Mammary epithelial cell (primary cell): ENCODE measurements at regions of chr11 and their contacts with region 1.

Region 1: DNA sequence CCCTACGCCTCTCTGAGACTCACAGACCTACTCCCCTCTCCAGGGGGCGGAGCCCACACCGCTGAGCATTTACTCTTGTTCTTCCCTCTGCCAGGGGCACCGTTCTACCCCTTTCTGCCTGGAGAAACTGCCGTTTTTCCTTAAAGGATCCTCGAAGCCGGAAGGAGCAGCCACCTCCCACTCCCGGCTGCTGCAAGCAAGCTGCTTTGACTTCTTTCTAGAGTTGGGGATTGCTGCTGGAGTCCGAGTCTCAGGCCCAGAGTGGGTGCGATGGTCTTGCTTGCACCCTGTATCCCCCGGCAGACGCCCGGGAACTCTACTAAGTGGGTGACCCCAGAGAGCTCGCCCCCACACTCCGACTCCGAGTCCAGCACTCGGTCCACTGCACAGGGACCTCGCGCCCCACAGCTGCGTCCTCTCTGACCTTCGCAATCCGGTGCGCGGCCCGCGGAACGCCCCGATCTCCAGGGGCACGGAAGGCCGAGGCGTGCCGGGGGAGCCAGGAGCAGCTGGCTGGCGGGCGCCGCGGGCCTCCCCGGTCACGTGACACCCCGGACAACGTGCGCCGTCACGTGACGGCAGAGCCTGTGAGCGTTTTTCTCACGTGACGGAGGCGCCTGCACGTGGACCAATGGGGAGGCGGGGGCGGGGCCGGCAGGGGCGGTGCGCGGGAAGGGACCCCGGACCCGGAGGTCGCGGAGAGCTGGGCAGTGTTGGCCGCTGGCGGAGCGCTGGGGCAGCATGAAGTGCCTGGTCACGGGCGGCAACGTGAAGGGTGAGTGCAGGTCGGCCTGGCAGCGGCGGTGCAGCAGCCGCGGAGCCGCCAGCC is at the start of gene RAD9A:
- DNase-seq: peak; percentile 89
- H3K4me3 ChIP-seq: peak within 1 kb of the TSS; percentile 74 to 78 (median 77)
- H3K27ac ChIP-seq: peak within 1 kb of the TSS; percentile 75
- H3K4me1 ChIP-seq: peaks cover 6% of the 10 kb centered on the region
- H3K27me3 ChIP-seq: no peaks in the 10 kb centered on the region
- CTCF ChIP-seq: no peak
- total RNA-seq, gene RAD9A: 6.5 to 17.2 TPM

Region 2: GRCh38 chr11:67252831-67253239 is 138.7 kb before region 1 on chr11:
- CTCF ChIA-PET with region 1: no interaction called
- dilution Hi-C with region 1: loop called (anchors 5 kb)
- in situ Hi-C with region 1: no loop called
- intact Hi-C with region 1: no loop called
- DNase-seq: peak; percentile 49
- H3K4me3 ChIP-seq: no peak overlapping the region
- H3K27ac ChIP-seq: peak overlapping the region; percentile 34
- H3K4me1 ChIP-seq: peaks cover 32% of the 10 kb centered on the region
- H3K27me3 ChIP-seq: no peaks in the 10 kb centered on the region
- CTCF ChIP-seq: peak; percentile 70 to 80

Region 3: DNA sequence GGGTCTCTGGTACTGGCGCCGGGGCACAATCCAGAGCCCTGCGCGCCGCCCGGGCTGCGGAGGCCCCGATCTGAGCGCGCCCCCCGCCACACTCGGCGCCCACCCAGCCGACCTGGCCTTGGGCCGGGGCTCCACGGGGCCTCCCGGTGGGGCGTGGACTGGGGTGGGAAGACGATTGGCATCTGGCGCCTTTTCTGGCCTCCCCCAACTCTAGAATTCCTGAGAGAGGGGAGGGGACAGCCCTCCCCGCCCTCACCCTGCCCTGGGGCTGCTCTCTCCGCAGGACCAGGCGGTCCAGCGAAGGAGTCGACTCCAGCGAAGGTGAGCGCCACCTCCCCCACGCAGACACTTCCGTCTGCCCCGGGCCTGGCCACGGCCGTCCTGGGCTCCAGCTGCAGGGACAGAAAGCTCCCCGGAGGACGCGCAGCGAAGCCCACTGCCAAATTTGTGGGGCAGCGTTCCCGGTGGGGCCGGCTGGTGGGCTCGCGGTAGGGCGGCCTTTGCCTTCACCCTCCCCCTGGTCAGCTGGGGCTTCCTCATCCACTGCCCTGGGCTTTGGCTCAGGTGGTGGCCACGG is 87.6 kb before region 1 on chr11:
- CTCF ChIA-PET with region 1: no interaction called
- dilution Hi-C with region 1: no loop called
- in situ Hi-C with region 1: no loop called
- intact Hi-C with region 1: no loop called
- DNase-seq: peak; percentile 22
- H3K4me3 ChIP-seq: peak overlapping the region; percentile 81 to 96 (median 89)
- H3K27ac ChIP-seq: peak overlapping the region; percentile 30
- H3K4me1 ChIP-seq: peaks cover 18% of the 10 kb centered on the region
- H3K27me3 ChIP-seq: no peaks in the 10 kb centered on the region
- CTCF ChIP-seq: no peak

Region 4: GRCh38 chr11:67345920-67346799 is 45.4 kb before region 1 on chr11:
- CTCF ChIA-PET with region 1: interaction called, 4 read pairs
- dilution Hi-C with region 1: loop called (anchors 5 kb)
- in situ Hi-C with region 1: no loop called
- intact Hi-C with region 1: no loop called
- DNase-seq: peak; percentile 92
- H3K4me3 ChIP-seq: no peak overlapping the region
- H3K27ac ChIP-seq: peak overlapping the region; percentile 77
- H3K4me1 ChIP-seq: peaks cover 21% of the 10 kb centered on the region
- H3K27me3 ChIP-seq: no peaks in the 10 kb centered on the region
- CTCF ChIP-seq: peak; percentile 79 to 97

Region 5: DNA sequence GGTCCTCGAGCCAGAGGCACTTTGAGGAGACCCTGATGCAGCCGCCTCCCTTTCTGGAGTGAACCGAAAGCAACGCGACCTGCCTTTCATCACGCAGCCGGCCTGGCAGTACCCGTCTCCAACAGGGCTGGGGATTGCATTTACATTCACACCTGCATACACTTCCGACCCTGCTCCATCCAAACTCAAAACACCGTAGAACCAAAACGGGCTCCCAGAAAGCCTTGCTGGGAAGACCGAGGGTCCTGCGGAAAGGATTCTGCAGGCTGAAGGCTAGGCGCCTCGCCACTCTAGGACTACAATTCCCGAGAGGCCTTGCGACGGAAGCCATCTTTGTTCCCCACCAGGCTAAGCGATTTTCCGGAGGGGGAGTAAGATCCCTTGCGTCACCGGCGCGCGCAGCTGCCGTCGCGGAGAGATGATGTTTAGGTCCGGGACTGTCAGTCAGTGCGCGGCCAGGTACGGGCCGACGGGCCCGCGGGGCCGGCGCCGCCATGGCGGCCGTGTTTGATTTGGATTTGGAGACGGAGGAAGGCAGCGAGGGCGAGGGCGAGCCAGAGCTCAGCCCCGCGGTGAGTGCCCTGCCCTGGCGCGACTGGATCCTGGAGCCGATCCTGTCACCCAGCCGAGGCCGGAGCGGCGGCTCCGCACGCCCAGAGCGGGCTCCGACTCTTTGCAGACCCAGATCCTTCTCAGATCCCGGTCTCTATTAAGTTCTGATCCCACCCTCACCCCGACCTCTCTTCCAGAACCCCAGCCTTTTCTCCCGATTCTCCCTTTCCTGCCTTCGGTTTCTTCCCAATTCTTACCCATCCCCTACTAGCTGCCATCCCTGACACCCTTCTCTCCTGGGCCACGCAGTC is 36.8 kb after region 1 on chr11 and contains the start of gene RPS6KB2:
- CTCF ChIA-PET with region 1: no interaction called
- dilution Hi-C with region 1: no loop called
- in situ Hi-C with region 1: no loop called
- intact Hi-C with region 1: no loop called
- DNase-seq: peak; percentile 95
- H3K4me3 ChIP-seq: peak within 1 kb of the TSS; percentile 62 to 72 (median 71)
- H3K27ac ChIP-seq: peak within 1 kb of the TSS; percentile 58
- H3K4me1 ChIP-seq: peaks cover 12% of the 10 kb centered on the region
- H3K27me3 ChIP-seq: no peaks in the 10 kb centered on the region
- CTCF ChIP-seq: no peak
- total RNA-seq, gene RPS6KB2: 35.7 to 62.3 TPM

Region 6: GRCh38 chr11:67452141-67452952 is 60.8 kb after region 1 on chr11 and contains the start of gene GPR152:
- CTCF ChIA-PET with region 1: no interaction called
- dilution Hi-C with region 1: loop called (anchors 5 kb)
- in situ Hi-C with region 1: no loop called
- intact Hi-C with region 1: no loop called
- DNase-seq: no peak
- H3K4me3 ChIP-seq: no peak within 1 kb of the TSS
- H3K27ac ChIP-seq: no peak within 1 kb of the TSS
- H3K4me1 ChIP-seq: peaks cover 6% of the 10 kb centered on the region
- H3K27me3 ChIP-seq: no peaks in the 10 kb centered on the region
- CTCF ChIP-seq: no peak
- total RNA-seq, gene GPR152: not detected

Region 7: DNA sequence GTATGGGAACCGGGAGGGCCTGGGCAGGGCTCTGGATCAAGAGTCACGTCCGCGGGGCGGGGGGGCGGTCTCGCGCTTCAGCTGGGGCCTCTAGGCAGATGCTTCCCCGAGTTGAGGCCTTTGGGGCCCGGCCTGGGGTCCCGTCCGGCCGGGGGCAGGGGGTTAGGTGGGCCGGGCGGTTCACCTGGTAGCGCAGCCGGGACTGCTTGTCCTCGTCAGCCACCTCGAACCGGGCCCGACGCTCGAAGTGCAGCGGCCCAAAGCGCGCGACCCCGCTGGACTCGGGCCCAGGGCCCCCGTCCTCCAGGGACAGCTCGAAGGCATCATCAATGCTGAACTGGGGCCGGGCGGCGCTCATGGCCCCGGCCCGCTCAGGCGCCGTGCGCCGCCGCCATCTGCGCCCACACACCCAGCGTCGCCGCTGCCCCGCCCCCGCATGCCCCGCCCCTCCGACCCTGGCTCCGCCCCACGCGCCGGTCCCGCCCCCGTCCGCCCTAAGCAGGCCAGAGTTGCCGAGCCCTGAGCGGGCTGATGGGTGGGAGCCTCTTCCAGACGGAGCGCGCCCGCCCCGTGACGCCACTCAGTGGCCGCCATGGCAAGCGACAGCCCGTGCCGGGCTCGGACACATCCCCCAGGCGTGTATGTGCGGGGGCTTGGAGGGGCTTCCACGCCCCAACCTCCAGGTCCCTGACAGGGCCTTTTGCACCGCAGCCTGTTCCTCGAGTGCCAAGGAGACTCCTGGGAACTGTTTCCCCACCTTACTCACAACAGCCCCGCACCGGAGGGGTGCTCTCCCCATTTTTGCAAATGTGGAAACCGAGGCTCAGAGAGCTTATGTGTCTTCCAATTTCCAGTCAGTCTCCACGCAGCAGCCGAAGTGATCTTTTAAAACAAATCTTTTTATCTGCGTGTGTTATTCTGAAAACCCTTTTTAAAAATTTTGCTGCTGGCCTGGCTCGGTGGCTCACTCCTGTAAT is 77.6 kb after region 1 on chr11 and contains the start of gene TMEM134:
- CTCF ChIA-PET with region 1: no interaction called
- dilution Hi-C with region 1: no loop called
- in situ Hi-C with region 1: no loop called
- intact Hi-C with region 1: loop called (anchors 1 kb)
- DNase-seq: peak; percentile 80
- H3K4me3 ChIP-seq: peak within 1 kb of the TSS; percentile 86 to 95 (median 92)
- H3K27ac ChIP-seq: peak within 1 kb of the TSS; percentile 71
- H3K4me1 ChIP-seq: peaks cover 20% of the 10 kb centered on the region
- H3K27me3 ChIP-seq: no peaks in the 10 kb centered on the region
- CTCF ChIP-seq: peak; percentile 24 to 53
- total RNA-seq, gene TMEM134: 55.3 to 69.4 TPM

Region 8: DNA sequence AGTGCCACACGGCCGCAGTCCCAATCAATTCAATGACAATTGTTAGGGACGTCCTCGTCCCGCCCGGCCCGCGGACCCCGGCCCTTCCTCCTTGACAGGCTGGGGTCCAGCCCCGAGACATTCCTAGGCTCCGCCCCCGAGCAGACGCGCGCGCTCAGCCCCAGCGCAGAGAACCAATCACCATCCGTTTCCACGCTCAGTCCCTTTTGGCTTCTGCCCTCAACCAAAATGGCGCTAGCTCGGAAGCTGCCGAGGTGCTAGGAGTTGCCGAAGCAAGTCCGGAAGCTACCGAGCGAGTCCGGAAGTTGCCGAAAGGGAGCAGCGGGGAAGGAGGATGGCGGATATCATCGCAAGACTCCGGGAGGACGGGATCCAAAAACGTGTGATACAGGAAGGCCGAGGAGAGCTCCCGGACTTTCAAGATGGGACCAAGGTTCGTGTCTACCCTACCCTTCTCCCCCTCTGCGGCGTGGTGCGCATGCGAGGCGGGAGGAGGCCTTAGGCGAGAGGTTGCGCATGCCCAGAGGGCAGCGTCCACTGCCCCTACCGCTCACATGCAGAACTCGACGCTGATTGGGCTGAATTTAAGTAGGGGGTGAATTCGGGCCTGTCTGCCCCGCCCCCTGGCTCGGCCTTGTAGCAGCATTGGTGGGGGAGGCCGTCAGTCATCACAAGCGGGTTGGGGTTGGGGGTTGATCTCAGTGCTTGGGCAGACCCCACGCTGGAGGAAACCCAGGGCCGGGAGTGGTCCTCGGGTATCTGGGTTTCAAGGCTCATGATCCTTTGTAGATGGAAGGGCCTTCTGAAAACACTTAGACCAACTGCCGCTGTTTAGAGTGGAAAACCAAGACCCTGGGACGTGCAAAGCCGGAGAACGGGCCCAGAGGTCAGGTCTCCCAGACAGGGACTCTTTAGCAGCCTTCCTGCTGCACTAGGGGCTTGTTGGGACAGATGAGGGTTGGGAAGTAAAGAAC is 91.6 kb after region 1 on chr11 and contains the start of gene AIP:
- CTCF ChIA-PET with region 1: no interaction called
- dilution Hi-C with region 1: loop called (anchors 5 kb)
- in situ Hi-C with region 1: no loop called
- intact Hi-C with region 1: no loop called
- DNase-seq: peak; percentile 96
- H3K4me3 ChIP-seq: peak within 1 kb of the TSS; percentile 56 to 78 (median 73)
- H3K27ac ChIP-seq: peak within 1 kb of the TSS; percentile 66
- H3K4me1 ChIP-seq: peaks cover 12% of the 10 kb centered on the region
- H3K27me3 ChIP-seq: no peaks in the 10 kb centered on the region
- CTCF ChIP-seq: peak; percentile 5 to 34
- total RNA-seq, gene AIP: 34.5 to 36.2 TPM